PC-9 (cell line): ENCODE measurements at regions of chr6 and their contacts with region 1.

Region 1: DNA sequence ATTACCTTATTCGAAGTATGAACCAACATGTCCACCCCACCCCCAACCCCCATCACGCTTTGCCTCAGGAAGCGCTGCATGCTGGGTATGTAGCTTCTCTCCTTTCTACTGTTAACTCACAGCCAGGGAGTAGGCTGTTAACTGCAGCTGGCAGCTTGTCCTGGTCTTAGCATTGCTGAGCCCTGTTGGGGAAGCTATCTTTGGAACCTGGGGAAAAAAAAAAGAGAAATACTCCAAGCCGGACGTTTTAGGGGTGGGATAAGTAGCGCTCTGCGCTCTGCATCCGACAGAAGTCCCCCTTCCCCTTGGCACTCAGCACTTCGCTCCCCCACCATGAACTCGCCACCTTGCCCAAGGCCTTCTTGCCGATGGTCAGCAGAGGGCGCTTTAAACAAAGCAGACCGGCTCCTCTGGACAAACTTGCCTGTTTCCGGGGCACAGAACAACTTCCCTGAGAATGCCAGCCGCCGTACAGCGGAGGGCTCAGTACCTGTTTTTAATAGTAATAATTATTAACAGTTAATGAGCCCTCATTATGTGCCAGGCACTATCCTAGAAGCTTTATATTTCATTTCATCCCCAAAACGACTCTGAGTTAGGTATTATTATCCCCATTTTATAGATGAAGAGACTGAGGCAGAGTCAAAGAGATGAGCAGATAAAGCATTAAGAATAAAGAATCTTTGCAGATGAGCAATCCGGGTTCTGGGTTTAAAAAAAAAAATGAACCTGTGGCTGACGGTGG is 35.2 kb upstream of the MDFI start:
- DNase-seq: peak; percentile 62 to 76
- H3K4me3 ChIP-seq: no peak overlapping the region; the same call in 1 of the 2 replicates
- H3K27ac ChIP-seq: no peak overlapping the region
- H3K4me1 ChIP-seq: no peaks in the 10 kb centered on the region
- H3K27me3 ChIP-seq: no peaks in the 10 kb centered on the region
- CTCF ChIP-seq: peak; percentile 92

Region 2: GRCh38 chr6:41306187-41306854 is 296.7 kb before region 1 on chr6:
- CTCF ChIA-PET with region 1: no interaction called
- POLR2A ChIA-PET with region 1: no interaction called
- intact Hi-C with region 1: loop called (anchors 5 kb)
- DNase-seq: peak; percentile 52 to 65
- H3K4me3 ChIP-seq: no peak overlapping the region
- H3K27ac ChIP-seq: no peak overlapping the region
- H3K4me1 ChIP-seq: no peaks in the 10 kb centered on the region
- H3K27me3 ChIP-seq: peaks cover 8% of the 10 kb centered on the region; the same call in 1 of the 2 replicates
- CTCF ChIP-seq: peak; percentile 78

Region 3: DNA sequence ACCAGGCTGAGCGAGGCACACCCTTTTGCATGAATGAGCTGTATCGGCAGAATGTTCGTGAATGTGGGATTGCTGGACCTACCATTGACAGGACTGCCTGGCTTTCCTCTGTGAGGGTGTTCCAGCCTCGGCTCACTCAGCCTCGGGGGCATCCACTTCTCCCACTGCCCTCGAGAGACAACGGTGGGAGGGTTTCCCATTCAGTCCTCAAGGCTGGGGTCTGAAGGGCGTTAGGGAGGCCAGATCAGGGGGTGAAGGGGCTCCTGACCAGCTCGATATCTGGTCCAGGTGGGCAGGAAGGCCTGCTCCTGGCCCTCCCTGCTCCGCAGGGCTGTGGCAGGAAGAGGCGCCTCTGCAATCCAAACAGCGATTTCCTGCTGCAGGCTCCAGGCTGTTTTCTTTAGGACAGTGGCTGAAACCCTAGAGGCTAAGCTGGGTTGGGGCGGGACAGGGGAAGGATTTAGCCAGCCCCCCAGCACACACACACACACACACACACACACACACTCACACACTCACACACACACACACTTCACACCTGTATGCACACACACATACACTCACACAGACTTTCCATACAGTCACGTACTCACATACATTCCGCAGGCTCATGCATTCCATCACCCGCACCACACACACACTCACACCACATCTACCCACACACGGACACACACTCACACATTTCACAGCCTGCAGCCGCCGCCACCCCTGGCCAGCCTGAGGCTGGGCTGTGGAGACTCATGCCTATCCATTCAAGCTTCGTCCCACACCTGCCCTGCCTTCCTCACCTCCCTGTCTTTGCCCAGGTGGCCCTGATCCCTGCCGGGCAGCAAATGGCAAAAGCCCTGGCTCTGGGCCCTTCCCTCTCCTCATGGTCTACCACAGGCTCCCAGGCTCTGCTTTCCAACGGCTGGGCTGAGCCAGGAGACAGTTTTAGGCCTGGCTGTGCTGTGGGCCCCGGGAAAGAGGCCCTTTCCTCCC is 53.0 kb after region 1 on chr6:
- CTCF ChIA-PET with region 1: interaction called, 17 read pairs
- POLR2A ChIA-PET with region 1: no interaction called
- intact Hi-C with region 1: no loop called
- DNase-seq: no peak
- H3K4me3 ChIP-seq: no peak overlapping the region
- H3K27ac ChIP-seq: no peak overlapping the region
- H3K4me1 ChIP-seq: 0 out of 2 replicates have a peak, but pooled peaks cover 8% of the 10 kb centered on the region
- H3K27me3 ChIP-seq: peaks cover 23% of the 10 kb centered on the region
- CTCF ChIP-seq: no peak

Region 4: GRCh38 chr6:41801380-41801779 is 198.3 kb after region 1 on chr6:
- CTCF ChIA-PET with region 1: no interaction called
- POLR2A ChIA-PET with region 1: no interaction called
- intact Hi-C with region 1: no loop called
- DNase-seq: peak in 1 of 2 experiments; percentile 25
- H3K4me3 ChIP-seq: no peak overlapping the region
- H3K27ac ChIP-seq: no peak overlapping the region
- H3K4me1 ChIP-seq: no peaks in the 10 kb centered on the region
- H3K27me3 ChIP-seq: no peaks in the 10 kb centered on the region
- CTCF ChIP-seq: peak; percentile 72